Endothelial cell of umbilical vein (primary cell): ENCODE measurements at regions of chr16 and their contacts with region 1.

Region 1: GRCh38 chr16:81403616-81404373 is 40.8 kb upstream of the CMIP start:
- DNase-seq: peak; percentile 80
- H3K4me3 ChIP-seq: no peak overlapping the region
- H3K27ac ChIP-seq: peak overlapping the region; percentile 75
- H3K4me1 ChIP-seq: peaks cover 33% of the 10 kb centered on the region
- H3K27me3 ChIP-seq: no peaks in the 10 kb centered on the region
- CTCF ChIP-seq: peak; percentile 90 to 95
- POLR2A ChIP-seq: no peak

Region 2: DNA sequence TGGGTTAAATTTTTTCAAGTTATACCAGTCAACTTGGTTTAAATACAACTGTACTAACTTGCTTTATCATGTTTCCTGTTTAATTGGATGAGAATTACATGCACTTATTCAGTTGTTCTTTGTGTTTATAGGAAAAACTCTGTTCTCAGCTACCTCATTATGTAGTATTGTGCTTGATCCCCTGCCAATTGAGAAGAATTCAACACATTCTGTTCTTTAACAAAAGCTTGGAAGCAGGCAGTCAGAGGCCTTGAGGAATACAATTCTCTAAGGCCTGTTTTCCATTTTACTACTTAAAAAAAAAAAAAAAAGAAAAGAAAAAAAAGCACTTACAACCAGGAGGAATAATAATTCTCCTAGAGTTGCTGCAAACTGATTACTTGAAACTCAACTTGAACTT is 19.8 kb before region 1 on chr16:
- CTCF ChIA-PET with region 1: interaction called, 20 read pairs
- POLR2A ChIA-PET with region 1: interaction called, 4 read pairs
- dilution Hi-C with region 1: no loop called
- intact Hi-C with region 1: loop called (anchors 1 kb)
- DNase-seq: peak; percentile 95
- H3K4me3 ChIP-seq: no peak overlapping the region
- H3K27ac ChIP-seq: peak overlapping the region; percentile 97
- H3K4me1 ChIP-seq: peaks cover 35% of the 10 kb centered on the region
- H3K27me3 ChIP-seq: no peaks in the 10 kb centered on the region
- CTCF ChIP-seq: no peak
- POLR2A ChIP-seq: no peak

Region 3: DNA sequence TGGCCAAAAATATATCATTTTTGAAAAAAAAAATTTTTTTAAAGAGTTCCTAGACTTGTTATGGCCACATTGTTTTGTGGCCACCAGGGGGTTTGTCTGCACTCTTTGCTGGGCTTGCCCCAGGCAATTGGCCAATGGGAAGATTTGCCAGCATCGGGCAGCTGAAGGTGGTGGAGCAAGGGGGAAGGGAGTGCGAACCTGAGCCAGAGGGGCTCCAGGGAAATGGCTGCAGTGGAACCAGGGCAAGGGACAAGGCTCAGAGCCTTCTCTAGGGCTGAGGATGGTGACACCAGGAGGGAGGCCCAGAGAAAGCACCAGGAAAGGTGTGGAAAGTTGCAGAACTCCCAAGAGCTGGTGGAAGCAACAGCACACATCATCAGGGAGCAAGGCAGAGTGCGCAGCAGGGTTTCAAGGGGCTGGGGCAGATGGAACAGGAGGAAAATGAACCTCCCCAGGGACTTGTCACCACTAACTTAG is 25.3 kb after region 1 on chr16:
- CTCF ChIA-PET with region 1: interaction called, 16 read pairs
- POLR2A ChIA-PET with region 1: no interaction called
- dilution Hi-C with region 1: no loop called
- intact Hi-C with region 1: no loop called
- DNase-seq: peak; percentile 70
- H3K4me3 ChIP-seq: no peak overlapping the region
- H3K27ac ChIP-seq: no peak overlapping the region
- H3K4me1 ChIP-seq: no peaks in the 10 kb centered on the region
- H3K27me3 ChIP-seq: no peaks in the 10 kb centered on the region
- CTCF ChIP-seq: peak; percentile 49 to 69
- POLR2A ChIP-seq: no peak

Region 4: DNA sequence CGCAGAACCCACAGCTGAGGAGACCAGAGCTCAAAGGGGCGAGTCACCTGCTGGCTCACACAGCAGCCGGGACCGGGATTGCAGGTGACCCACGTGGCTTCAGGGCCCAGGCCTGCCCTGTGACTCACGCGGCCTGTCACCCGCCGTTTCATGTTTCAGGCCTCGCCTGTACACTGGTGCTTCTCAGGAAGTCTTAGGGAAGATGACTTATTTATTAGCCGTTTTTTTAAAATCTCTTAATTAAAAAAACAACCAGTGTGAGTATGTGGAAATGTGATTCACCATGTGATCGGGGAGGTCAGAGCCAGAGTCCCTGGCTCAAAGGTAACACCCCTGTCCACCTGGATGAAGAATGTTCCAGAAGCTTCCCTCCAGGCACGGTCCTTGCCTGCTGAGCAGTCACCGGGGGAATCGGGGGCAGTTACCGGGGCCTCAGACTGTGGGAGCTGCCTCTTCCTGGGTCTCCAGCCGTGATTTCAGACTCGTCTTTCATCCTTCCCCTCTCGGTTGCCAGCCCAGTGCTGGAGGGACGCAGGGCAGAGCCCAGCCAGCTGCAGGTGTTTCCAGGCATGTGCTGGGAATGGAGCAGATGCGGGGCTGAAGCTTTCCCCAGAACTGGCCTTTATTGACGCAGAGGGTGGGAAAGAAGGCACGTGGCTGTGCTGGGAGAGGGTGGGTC is 90.1 kb after region 1 on chr16:
- CTCF ChIA-PET with region 1: interaction called, 5 read pairs
- POLR2A ChIA-PET with region 1: no interaction called
- dilution Hi-C with region 1: no loop called
- intact Hi-C with region 1: loop called (anchors 1 kb)
- DNase-seq: peak; percentile 94
- H3K4me3 ChIP-seq: no peak overlapping the region
- H3K27ac ChIP-seq: peak overlapping the region; percentile 96
- H3K4me1 ChIP-seq: peaks cover 80% of the 10 kb centered on the region
- H3K27me3 ChIP-seq: no peaks in the 10 kb centered on the region
- CTCF ChIP-seq: no peak
- POLR2A ChIP-seq: no peak

Region 5: DNA sequence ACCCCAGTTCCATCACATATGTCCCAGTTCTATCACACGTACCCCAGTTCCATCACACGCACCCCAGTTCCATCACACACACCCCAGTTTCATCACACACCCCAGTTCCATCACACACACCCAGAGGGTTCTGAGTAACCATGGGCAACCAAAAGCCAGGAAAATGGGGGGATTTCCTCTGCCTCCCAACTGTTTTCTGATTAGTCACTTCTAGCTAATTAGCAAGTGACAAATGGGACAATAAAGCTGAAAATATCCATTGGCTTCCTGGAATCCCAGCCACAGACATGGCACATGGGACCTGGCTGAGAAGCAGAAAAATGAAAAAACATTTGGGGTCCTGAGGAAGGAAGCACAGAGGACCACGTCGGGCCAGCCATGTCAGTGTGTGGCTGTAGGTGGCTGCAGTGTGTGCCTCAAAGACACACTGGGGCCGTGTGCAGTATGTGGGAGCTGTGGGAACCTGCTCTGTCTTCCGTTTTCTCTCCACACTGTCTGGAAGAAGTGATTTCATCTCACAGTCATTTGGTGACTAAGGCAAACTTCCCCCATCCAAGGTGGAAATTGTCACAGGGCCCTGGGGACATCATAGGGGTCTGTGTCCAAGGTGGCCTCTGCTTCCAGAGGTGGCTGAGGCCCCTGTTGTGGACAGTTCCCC is 147.5 kb after region 1 on chr16:
- CTCF ChIA-PET with region 1: interaction called, 3 read pairs
- POLR2A ChIA-PET with region 1: no interaction called
- dilution Hi-C with region 1: no loop called
- intact Hi-C with region 1: loop called (anchors 5 kb)
- DNase-seq: peak; percentile 76
- H3K4me3 ChIP-seq: no peak overlapping the region
- H3K27ac ChIP-seq: peak overlapping the region; percentile 87
- H3K4me1 ChIP-seq: peaks cover 46% of the 10 kb centered on the region
- H3K27me3 ChIP-seq: no peaks in the 10 kb centered on the region
- CTCF ChIP-seq: no peak
- POLR2A ChIP-seq: no peak

Region 6: DNA sequence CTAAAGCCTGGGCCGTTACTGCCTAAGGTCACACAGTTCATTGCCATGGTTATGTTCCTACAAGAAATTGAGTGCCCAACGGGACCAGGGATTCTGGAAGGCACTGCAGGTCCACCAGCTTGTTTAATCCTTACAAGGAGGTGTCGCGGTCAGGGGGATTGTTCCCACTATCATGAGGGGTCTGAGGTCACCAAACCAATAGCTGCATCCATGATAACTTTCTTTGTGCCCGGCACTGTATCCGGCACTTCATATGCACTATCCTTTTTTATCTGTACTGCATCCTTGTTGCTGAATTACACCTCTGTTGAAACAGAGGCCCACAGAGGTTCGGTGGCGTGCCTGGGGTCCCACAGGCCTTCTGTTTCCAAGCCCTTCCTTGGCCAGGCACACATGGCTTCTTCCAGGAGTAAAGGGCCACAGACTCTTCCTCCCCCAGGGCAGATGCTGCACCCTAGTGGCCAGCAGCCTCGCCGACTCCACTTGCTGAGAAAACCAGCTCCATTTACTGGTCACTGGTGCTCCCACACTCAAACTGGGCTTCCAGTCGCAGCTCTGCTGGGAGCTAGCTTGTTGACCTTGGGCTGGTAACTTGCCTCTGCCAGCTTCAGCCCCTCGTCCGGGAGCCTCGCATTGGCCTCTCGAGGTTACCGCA is 293.3 kb after region 1 on chr16:
- CTCF ChIA-PET with region 1: interaction called, 22 read pairs
- POLR2A ChIA-PET with region 1: no interaction called
- dilution Hi-C with region 1: no loop called
- intact Hi-C with region 1: loop called (anchors 1 kb)
- DNase-seq: peak; percentile 79
- H3K4me3 ChIP-seq: no peak overlapping the region
- H3K27ac ChIP-seq: peak overlapping the region; percentile 98
- H3K4me1 ChIP-seq: peaks cover 62% of the 10 kb centered on the region
- H3K27me3 ChIP-seq: no peaks in the 10 kb centered on the region
- CTCF ChIP-seq: peak; percentile 79 to 84
- POLR2A ChIP-seq: no peak

Region 7: DNA sequence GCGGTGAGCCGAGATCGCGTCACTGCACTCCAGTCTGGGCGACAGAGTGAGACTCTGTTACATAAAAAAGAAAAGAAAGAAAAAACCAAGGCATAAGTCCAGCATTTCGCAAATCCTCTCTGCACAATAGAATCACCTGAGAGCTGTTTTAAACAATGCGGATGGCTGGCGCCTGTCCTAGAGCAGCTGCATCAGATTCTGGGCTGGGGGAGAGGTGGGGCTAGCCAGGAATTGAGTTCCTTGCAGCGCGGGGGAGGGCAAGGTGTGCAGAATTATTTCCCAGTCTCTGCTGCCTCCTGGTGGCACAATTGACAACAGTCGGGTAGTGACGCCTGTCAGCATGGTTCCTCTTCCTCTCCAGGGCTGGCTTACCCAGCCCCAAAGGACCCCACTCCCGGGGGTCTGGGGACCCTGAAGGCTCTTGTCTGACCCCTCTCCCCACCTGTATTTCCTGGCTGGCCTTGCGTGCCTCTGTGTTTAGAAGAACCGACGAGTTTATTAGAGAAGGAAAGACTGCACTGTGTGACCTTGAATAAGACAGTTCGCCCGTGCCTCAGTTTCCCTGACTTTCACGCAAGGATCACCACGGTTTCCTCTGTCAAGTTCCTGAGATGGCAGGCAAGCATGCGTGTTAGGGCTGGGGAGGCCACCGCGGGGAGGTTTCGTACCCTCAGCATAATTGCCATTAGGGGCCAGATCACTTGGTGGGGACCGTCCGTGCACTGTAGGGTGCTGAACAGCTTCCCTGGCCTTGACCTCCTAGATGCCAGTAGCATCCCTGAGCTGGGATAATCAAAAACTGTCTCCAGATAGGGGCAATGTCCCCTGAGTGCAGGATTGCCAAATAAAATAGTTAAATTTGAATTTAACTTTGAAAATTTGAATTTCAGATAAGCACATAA is 334.3 kb after region 1 on chr16:
- CTCF ChIA-PET with region 1: interaction called, 3 read pairs
- POLR2A ChIA-PET with region 1: no interaction called
- dilution Hi-C with region 1: loop called (anchors 25 kb)
- intact Hi-C with region 1: loop called (anchors 1 kb)
- DNase-seq: peak; percentile 81
- H3K4me3 ChIP-seq: peak overlapping the region in 1 of 3 experiments; percentile 40
- H3K27ac ChIP-seq: no peak overlapping the region
- H3K4me1 ChIP-seq: peaks cover 4% of the 10 kb centered on the region
- H3K27me3 ChIP-seq: no peaks in the 10 kb centered on the region
- CTCF ChIP-seq: peak; percentile 77 to 83
- POLR2A ChIP-seq: no peak